AG04449 (cell line): ENCODE measurements at regions of chr1 and their contacts with region 1.

Region 1: GRCh38 chr1:205061665-205062069 is 18.7 kb downstream of the CNTN2 start:
- DNase-seq: no peak
- H3K4me3 ChIP-seq: no peak overlapping the region
- CTCF ChIP-seq: peak; percentile 90

Region 2: GRCh38 chr1:204935155-204935554 is 126.5 kb before region 1 on chr1:
- CTCF ChIA-PET with region 1: no interaction called
- POLR2A ChIA-PET with region 1: no interaction called
- DNase-seq: no peak
- H3K4me3 ChIP-seq: no peak overlapping the region
- CTCF ChIP-seq: no peak

Region 3: GRCh38 chr1:204975570-204976235 is 86.0 kb before region 1 on chr1:
- CTCF ChIA-PET with region 1: interaction called, 153 read pairs
- POLR2A ChIA-PET with region 1: no interaction called
- DNase-seq: no peak
- H3K4me3 ChIP-seq: no peak overlapping the region
- CTCF ChIP-seq: peak; percentile 79

Region 4: GRCh38 chr1:204997591-204998355 is 63.9 kb before region 1 on chr1:
- CTCF ChIA-PET with region 1: interaction called, 262 read pairs
- POLR2A ChIA-PET with region 1: no interaction called
- DNase-seq: no peak
- H3K4me3 ChIP-seq: no peak overlapping the region
- CTCF ChIP-seq: no peak

Region 5: DNA sequence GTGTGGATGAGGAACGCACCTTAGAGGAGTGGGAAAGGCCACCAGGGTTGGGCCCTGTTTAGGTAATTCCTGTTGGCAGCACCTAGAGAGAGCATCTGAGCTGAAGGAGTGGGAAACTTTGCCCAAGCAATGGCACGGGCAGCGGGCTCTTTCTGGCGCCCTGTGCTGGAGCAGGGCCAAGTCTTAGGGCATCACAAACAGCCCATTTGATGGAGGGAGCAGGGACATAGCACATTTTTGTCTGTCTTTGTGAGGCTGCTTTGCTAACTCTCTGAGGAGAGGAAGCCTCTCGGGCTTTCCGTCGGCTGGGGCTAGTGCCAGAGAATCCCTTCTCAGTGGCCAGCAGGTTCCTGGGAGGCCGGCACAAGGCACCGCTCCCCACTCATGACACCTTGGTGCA is 41.2 kb before region 1 on chr1:
- CTCF ChIA-PET with region 1: interaction called, 15 read pairs
- POLR2A ChIA-PET with region 1: no interaction called
- DNase-seq: no peak
- H3K4me3 ChIP-seq: no peak overlapping the region
- CTCF ChIP-seq: no peak

Region 6: DNA sequence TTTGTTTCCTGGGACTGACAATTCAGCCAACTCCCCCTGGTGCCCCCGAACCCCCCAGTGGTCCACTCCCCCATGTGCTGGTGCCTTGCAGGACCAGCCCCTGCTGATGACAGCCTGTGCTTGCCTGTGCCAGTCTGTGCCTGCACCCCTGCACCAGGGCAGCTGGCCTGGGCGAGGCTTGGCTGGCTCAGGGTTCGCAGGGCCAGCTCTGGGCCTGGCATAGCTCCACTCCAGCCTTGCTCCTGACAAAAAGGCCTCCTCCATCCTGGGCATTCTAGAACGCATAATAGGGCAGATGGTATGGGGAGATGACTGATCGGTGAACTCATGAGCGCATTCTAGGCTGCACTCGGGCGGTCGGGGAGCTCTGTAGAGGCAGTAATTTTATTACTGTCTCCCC is 13.3 kb before region 1 on chr1:
- CTCF ChIA-PET with region 1: interaction called, 90 read pairs
- POLR2A ChIA-PET with region 1: no interaction called
- DNase-seq: no peak
- H3K4me3 ChIP-seq: no peak overlapping the region
- CTCF ChIP-seq: no peak

Region 7: DNA sequence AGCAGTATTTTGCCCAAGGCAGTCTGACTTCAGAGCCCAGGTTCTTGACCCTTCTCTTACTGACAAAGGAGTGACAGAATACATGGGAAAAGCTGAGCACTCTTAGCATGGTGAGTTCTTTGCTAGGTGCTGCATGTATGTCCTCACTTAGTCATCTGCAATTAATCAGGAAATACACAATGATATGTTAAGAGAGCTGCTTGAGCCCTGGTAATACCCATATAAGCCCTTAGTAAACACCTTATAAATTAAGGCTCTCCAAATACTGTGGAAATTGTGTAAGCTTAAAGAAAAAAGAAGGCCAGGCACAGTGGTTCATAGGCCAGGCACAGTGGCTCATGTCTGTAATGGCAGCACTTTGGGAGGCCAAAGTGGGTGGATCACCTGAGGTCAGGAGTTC is 36.6 kb after region 1 on chr1:
- CTCF ChIA-PET with region 1: interaction called, 13 read pairs
- POLR2A ChIA-PET with region 1: no interaction called
- DNase-seq: no peak
- H3K4me3 ChIP-seq: no peak overlapping the region
- CTCF ChIP-seq: no peak

Region 8: DNA sequence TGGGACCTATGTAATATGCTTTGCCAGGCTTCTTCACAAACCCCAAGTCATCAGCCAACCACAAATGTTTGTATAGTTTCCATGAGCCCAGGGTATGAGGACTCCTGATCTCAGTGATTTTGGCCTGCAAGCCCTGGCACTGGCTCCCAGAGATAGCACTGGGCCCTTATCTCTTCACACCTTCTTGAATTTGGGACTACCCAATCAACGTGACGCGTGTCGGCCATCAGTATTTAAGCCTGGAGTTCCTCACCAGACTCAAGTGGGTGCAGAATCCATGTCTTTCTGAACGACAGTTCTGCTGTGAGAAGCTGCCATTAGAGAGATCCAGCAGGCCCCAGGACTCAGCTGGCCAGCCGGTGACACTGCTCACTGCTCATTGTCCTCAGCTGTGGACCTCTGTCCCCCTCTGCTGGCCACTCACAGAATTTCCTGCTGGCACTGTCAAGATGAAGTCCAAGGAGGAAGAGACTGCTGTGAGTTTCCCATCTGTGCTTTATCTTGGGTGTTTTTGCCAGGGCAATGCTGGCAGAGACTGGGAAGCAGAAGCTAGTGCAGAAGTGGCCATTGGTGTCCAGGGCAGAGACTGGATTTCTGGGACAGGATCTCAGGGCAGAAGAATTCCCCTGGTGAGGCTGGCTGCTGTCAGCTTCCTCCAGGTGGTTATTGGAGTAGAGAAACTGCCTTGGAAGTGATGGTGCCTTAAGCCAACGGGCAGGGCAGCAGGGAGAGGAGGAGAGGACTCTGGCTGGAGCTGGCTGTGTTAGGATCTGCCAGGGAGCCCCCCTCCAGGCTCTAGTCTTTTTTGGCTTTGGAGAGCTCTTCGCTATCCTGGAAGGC is 194.5 kb after region 1 on chr1:
- CTCF ChIA-PET with region 1: interaction called, 127 read pairs
- POLR2A ChIA-PET with region 1: no interaction called
- DNase-seq: peak; percentile 26
- H3K4me3 ChIP-seq: no peak overlapping the region
- CTCF ChIP-seq: peak; percentile 90

Region 9: GRCh38 chr1:205319131-205320018 is 257.7 kb after region 1 on chr1:
- CTCF ChIA-PET with region 1: no interaction called
- POLR2A ChIA-PET with region 1: no interaction called
- DNase-seq: no peak
- H3K4me3 ChIP-seq: peak overlapping the region; percentile 54
- CTCF ChIP-seq: no peak